Activated CD4-positive, alpha-beta T cell treated with anti-CD3 and anti-CD28 coated beads, Interleukin-2, amount 10 ng/mL, durations not matched to agents 24 days and 14 days (primary cell): ENCODE measurements at regions of chr2 and their contacts with region 1.

Region 1: DNA sequence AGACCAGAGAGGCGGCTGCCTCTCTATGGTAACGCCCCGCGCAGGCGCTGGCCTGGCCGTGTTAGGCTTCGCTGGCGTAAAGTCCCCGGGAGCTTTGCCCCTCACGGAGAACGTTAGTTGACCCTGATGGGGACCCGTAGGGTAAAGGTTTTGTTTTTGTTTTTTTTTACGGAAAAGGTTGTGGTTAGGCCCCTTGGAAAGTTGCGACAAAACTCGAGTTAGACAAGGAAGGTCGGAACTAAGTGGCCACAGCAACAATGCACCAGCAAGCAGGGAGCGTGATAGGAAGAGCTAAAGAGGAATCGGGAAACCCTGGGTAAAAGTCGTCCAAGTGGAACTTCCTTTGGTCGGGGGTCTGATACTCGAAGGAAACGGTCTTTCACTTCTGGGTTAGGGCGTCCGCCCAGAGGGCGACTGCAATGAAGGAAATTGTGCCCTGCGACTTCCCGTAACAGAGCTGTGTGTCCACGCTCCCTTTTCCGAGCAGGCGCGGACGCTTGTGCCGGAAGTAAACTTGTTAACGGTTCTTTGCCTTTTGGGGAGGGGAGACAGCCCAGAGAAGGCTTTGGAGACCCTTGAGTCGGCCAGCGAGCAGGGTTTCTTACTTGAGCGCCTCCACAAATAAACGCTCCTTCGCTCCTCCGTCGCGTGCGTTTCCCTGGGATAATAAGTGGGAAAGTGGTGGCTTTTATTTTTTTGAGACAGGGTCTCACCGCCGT is 493 bp upstream of the CLASP1 start:
- DNase-seq: peak; percentile 99
- H3K4me3 Mint-ChIP-seq: peak overlapping the region; percentile 91
- H3K27ac Mint-ChIP-seq: peak overlapping the region; percentile 100
- H3K4me1 Mint-ChIP-seq: peaks cover 53% of the 10 kb centered on the region
- H3K27me3 Mint-ChIP-seq: no peaks in the 10 kb centered on the region

Region 2: DNA sequence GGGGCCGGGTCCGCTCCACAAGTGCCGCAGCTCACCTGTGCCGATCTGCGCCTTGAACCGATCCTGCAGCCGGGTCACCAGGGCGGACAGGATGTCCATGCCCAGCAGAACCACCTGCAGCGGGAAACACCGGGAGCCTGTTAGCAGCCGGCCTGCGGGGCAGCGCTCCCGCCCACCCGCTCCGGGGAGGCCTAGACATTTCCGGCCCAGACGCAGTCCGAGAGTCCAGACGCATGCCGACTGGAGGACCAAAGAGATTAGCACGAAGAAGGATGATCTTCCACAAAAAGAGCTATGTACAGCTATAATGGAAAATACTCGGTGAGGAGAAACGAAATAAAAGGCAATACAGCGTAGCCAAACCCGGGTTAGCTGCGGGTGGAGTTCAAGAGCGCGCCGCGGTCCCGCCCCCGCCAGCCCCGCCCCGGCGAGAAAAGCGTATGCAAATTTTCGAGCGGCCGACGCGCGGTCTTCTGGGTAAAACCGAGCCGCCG is 119.5 kb before region 1 on chr2:
- intact Hi-C with region 1: loop called (anchors 1 kb)
- DNase-seq: no peak
- H3K4me3 Mint-ChIP-seq: peak overlapping the region; percentile 90
- H3K27ac Mint-ChIP-seq: peak overlapping the region; percentile 96
- H3K4me1 Mint-ChIP-seq: peaks cover 55% of the 10 kb centered on the region
- H3K27me3 Mint-ChIP-seq: no peaks in the 10 kb centered on the region

Region 3: DNA sequence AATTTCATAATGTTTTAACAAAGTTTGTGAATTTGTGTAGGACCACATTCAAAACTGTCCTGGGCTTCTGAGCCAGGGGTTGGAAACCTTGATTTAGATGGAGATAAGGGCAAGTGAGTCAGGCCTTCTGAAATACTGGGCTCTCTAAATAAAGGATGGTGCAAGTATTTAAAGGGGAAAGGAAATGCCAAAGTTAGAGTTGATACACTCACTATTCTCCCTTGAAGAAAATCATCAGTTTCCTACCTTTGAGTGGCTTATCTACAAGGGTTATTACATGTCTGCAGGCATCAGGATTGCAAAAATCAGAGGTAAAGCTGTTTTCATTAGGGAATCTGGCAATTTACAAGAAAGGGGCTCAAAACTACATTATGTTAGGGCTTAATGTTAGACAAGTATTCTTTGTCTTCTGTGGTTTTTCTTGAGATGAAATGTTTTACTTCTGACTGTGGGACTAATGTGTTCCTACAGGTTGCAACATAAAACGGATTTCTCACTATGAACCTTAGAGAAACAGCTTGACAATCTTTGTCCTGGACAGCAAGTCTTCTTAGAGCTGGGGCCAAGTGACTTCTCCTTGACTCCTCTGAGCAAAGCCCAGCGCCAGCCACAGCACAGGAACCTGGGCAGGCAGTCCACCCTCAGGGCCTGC is 88.0 kb before region 1 on chr2:
- intact Hi-C with region 1: no loop called
- DNase-seq: no peak
- H3K4me3 Mint-ChIP-seq: no peak overlapping the region
- H3K27ac Mint-ChIP-seq: peak overlapping the region; percentile 19
- H3K4me1 Mint-ChIP-seq: peaks cover 29% of the 10 kb centered on the region
- H3K27me3 Mint-ChIP-seq: no peaks in the 10 kb centered on the region

Region 4: DNA sequence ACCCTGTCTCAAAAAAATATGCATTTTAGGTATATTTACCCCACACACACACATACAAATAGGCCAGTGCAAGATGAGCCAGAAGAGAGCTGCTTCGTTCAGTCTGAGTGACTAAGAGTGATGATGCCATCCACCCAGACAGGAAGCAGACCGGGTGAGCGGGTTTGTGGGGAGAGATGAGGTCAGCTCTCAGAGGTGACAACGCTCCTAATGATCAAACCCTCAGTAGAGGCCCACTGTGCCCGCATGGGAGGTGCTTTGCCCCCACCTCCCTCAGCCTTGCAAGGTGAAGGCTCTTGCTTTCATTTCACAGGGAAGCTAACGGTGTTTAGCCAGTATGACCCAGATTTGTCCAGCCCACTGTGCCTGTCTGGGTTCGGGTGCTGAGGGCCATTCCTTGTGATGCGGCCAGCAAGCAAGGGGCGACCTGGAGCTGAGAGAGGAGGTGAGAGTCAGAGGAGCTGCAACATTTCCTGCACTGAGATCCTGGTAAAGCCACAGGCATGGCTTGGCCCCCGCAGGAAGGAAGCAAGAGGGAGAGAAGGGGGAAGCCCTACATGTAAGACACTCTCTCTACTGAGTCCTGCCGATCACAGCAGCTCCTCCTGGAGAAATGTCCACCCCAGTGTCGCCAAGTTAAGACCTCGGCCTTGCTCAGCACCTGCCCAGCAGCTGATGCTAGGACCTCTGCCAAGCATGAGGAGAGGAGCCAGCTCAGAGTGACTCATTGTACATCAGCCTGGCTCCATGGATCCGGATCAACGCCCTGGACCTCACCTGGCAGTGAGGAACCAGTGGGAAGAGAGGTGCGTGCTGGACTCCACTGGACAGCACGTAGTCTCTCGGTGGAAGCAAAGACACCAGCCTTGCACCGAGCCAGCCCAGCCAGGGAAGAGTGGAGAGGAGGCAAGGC is 49.9 kb after region 1 on chr2:
- intact Hi-C with region 1: loop called (anchors 1 kb)
- DNase-seq: peak; percentile 94
- H3K4me3 Mint-ChIP-seq: peak overlapping the region; percentile 91
- H3K27ac Mint-ChIP-seq: peak overlapping the region; percentile 98
- H3K4me1 Mint-ChIP-seq: peaks cover 39% of the 10 kb centered on the region
- H3K27me3 Mint-ChIP-seq: no peaks in the 10 kb centered on the region

Region 5: GRCh38 chr2:121736462-121737341 is 86.9 kb after region 1 on chr2 and contains the start of gene NIFK:
- intact Hi-C with region 1: loop called (anchors 1 kb)
- DNase-seq: peak; percentile 100
- H3K4me3 Mint-ChIP-seq: peak within 1 kb of the TSS; percentile 90
- H3K27ac Mint-ChIP-seq: peak within 1 kb of the TSS; percentile 93
- H3K4me1 Mint-ChIP-seq: peaks cover 23% of the 10 kb centered on the region
- H3K27me3 Mint-ChIP-seq: no peaks in the 10 kb centered on the region
- total RNA-seq, gene NIFK: 164 and 177 TPM in 2 replicates